Esophagus muscularis mucosa (tissue), 4 donors: ENCODE measurements at regions of chr11 and their contacts with region 1.

Region 1: GRCh38 chr11:61152816-61153592 is 8.2 kb downstream of the VPS37C start:
- DNase-seq: no peak
- H3K4me3 ChIP-seq: peak overlapping the region in 1 of 4 donors; percentile 22
- H3K27ac ChIP-seq: peak overlapping the region; percentile 83 to 89 (median 88)
- H3K4me1 ChIP-seq: peaks cover 45 to 77% (median 69%) of the 10 kb centered on the region in 4 donors
- H3K27me3 ChIP-seq: no peaks in the 10 kb centered on the region
- CTCF ChIP-seq: no peak
- EP300 ChIP-seq: no peak
- POLR2A ChIP-seq: no peak

Region 2: GRCh38 chr11:60906132-60906972 is 246.7 kb before region 1 on chr11 and contains the start of gene PRPF19:
- intact Hi-C with region 1: loop called (anchors 10 kb)
- DNase-seq: peak; percentile 99
- H3K4me3 ChIP-seq: peak within 1 kb of the TSS; percentile 72 to 97 (median 93)
- H3K27ac ChIP-seq: peak within 1 kb of the TSS; percentile 91 to 98 (median 94)
- H3K4me1 ChIP-seq: peaks cover 31 to 33% (median 32%) of the 10 kb centered on the region in 4 donors
- H3K27me3 ChIP-seq: no peaks in the 10 kb centered on the region
- CTCF ChIP-seq: no peak
- EP300 ChIP-seq: no peak
- POLR2A ChIP-seq: peak; percentile 54
- total RNA-seq, gene PRPF19: 35.7 to 63.0 (median 57.1) TPM

Region 3: GRCh38 chr11:61091373-61092279 is 61.4 kb before region 1 on chr11:
- intact Hi-C with region 1: no loop called
- DNase-seq: no peak
- H3K4me3 ChIP-seq: no peak overlapping the region
- H3K27ac ChIP-seq: no peak overlapping the region
- H3K4me1 ChIP-seq: no peaks in the 10 kb centered on the region
- H3K27me3 ChIP-seq: no peaks in the 10 kb centered on the region
- CTCF ChIP-seq: no peak
- EP300 ChIP-seq: no peak
- POLR2A ChIP-seq: no peak

Region 4: GRCh38 chr11:61747192-61747966 is 594.4 kb after region 1 on chr11:
- intact Hi-C with region 1: no loop called
- DNase-seq: no peak
- H3K4me3 ChIP-seq: no peak overlapping the region
- H3K27ac ChIP-seq: no peak overlapping the region
- H3K4me1 ChIP-seq: peaks cover 6 to 18% (median 15%) of the 10 kb centered on the region in 4 donors
- H3K27me3 ChIP-seq: peaks cover 0 to 27% (median 9%) of the 10 kb centered on the region in 4 donors
- CTCF ChIP-seq: peak; percentile 71 to 92 (median 72)
- EP300 ChIP-seq: no peak
- POLR2A ChIP-seq: no peak